Activated CD8-positive, alpha-beta memory T cell treated with anti-CD3 and anti-CD28 coated beads, Interleukin-2, amount 10 ng/mL, durations not matched to agents 7 days and 5 days (primary cell): ENCODE measurements at regions of chr5 and their contacts with region 1.

Region 1: GRCh38 chr5:142655339-142656267 is 30.3 kb downstream of the FGF1 start:
- DNase-seq: peak; percentile 70
- ATAC-seq: peak; percentile 82
- H3K4me3 Mint-ChIP-seq: no peak overlapping the region
- H3K27ac Mint-ChIP-seq: no peak overlapping the region
- H3K4me1 Mint-ChIP-seq: no peaks in the 10 kb centered on the region
- H3K27me3 Mint-ChIP-seq: peaks cover 24% of the 10 kb centered on the region

Region 2: GRCh38 chr5:142644640-142645361 is 10.8 kb before region 1 on chr5:
- CTCF ChIA-PET with region 1: interaction called, 29 read pairs
- DNase-seq: no peak
- ATAC-seq: no peak
- H3K4me3 Mint-ChIP-seq: no peak overlapping the region
- H3K27ac Mint-ChIP-seq: no peak overlapping the region
- H3K4me1 Mint-ChIP-seq: peaks cover 3% of the 10 kb centered on the region
- H3K27me3 Mint-ChIP-seq: peaks cover 33% of the 10 kb centered on the region

Region 3: DNA sequence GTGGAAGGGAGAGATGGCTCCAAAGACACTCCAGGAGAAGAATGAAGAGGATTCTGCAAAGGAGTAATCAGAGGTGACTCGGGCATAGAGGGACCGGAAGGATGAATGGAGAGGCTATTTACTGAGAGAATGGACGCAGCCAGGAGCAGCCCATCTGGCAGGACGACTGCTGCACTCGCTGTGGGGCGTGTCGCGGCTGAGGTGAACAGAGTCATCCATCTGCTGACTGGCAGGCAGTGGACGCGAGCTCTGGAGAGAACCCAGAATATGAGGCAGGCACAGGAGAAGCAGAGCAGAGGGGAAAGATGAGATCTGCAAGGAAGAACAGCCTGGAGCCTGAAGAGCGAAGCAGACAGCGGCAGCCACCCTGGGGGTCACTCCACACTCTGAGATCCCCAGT is 13.9 kb after region 1 on chr5:
- CTCF ChIA-PET with region 1: interaction called, 16 read pairs
- DNase-seq: no peak
- ATAC-seq: no peak
- H3K4me3 Mint-ChIP-seq: no peak overlapping the region
- H3K27ac Mint-ChIP-seq: no peak overlapping the region
- H3K4me1 Mint-ChIP-seq: no peaks in the 10 kb centered on the region
- H3K27me3 Mint-ChIP-seq: peaks cover 2% of the 10 kb centered on the region

Region 4: GRCh38 chr5:142699184-142699720 is 43.6 kb after region 1 on chr5:
- CTCF ChIA-PET with region 1: interaction called, 51 read pairs
- DNase-seq: peak; percentile 85
- ATAC-seq: peak; percentile 90
- H3K4me3 Mint-ChIP-seq: no peak overlapping the region
- H3K27ac Mint-ChIP-seq: no peak overlapping the region
- H3K4me1 Mint-ChIP-seq: no peaks in the 10 kb centered on the region
- H3K27me3 Mint-ChIP-seq: peaks cover 18% of the 10 kb centered on the region

Region 5: GRCh38 chr5:142888469-142889085 is 233.0 kb after region 1 on chr5:
- CTCF ChIA-PET with region 1: interaction called, 18 read pairs
- DNase-seq: no peak
- ATAC-seq: no peak
- H3K4me3 Mint-ChIP-seq: no peak overlapping the region
- H3K27ac Mint-ChIP-seq: no peak overlapping the region
- H3K4me1 Mint-ChIP-seq: peaks cover 8% of the 10 kb centered on the region
- H3K27me3 Mint-ChIP-seq: no peaks in the 10 kb centered on the region